Ovary (tissue), 10 donors: ENCODE measurements at regions of chr13 and their contacts with region 1.

Region 1: GRCh38 chr13:39263033-39263432 is 224.8 kb downstream of the NHLRC3 start:
- DNase-seq: peak in 2 of 5 donors; percentile 23 to 38
- H3K4me3 ChIP-seq: no peak overlapping the region
- H3K27ac ChIP-seq: no peak overlapping the region
- H3K4me1 ChIP-seq: peaks cover 2% of the 10 kb centered on the region
- H3K27me3 ChIP-seq: no peaks in the 10 kb centered on the region
- CTCF ChIP-seq: peak in 1 of 3 donors; percentile 48
- EP300 ChIP-seq: no peak
- POLR2A ChIP-seq: no peak

Region 2: DNA sequence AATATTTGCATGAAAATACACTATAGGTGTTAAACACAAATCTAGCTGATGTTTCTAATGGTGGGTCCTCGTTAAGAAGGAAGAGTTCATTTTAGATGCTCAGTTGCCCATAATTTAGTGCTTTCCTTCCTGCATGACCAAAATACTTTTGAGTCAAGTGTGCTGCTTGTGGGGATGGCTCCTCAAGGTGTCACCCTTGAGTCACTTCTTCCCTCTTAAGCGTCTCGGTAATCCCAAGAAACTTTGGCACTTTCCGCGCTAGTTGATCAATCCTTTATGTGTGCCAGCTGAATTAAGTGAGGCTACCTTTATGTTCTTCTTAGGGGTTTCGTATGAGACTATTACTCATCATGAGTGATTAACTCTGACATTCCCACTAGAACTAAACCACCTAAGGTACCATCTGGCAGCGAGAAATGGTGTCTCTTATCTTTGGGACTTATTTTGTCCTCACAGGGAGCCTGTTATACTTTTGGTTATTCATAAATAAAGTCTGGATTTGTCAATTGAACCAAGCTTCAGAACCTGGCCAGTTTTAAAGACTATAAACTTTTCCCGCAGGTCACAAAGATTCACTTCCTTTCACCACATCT is 118.0 kb before region 1 on chr13:
- intact Hi-C with region 1: loop called in 3 of 4 experiments (anchors 10 kb)
- DNase-seq: peak; percentile 44 to 74 (median 55)
- H3K4me3 ChIP-seq: no peak overlapping the region
- H3K27ac ChIP-seq: no peak overlapping the region
- H3K4me1 ChIP-seq: no peaks in the 10 kb centered on the region
- H3K27me3 ChIP-seq: no peaks in the 10 kb centered on the region
- CTCF ChIP-seq: peak in 2 of 3 donors; percentile 59 to 65
- EP300 ChIP-seq: no peak
- POLR2A ChIP-seq: no peak

Region 3: GRCh38 chr13:39159393-39159792 is 103.6 kb before region 1 on chr13:
- intact Hi-C with region 1: loop called in 1 of 4 experiments (anchors 10 kb)
- DNase-seq: no peak
- H3K4me3 ChIP-seq: no peak overlapping the region
- H3K27ac ChIP-seq: no peak overlapping the region
- H3K4me1 ChIP-seq: no peaks in the 10 kb centered on the region
- H3K27me3 ChIP-seq: no peaks in the 10 kb centered on the region
- CTCF ChIP-seq: no peak
- EP300 ChIP-seq: no peak
- POLR2A ChIP-seq: no peak

Region 4: GRCh38 chr13:39474600-39474999 is 211.6 kb after region 1 on chr13:
- intact Hi-C with region 1: no loop called
- DNase-seq: no peak
- H3K4me3 ChIP-seq: no peak overlapping the region
- H3K27ac ChIP-seq: no peak overlapping the region
- H3K4me1 ChIP-seq: peaks cover 2% of the 10 kb centered on the region
- H3K27me3 ChIP-seq: no peaks in the 10 kb centered on the region
- CTCF ChIP-seq: no peak
- EP300 ChIP-seq: no peak
- POLR2A ChIP-seq: no peak

Region 5: DNA sequence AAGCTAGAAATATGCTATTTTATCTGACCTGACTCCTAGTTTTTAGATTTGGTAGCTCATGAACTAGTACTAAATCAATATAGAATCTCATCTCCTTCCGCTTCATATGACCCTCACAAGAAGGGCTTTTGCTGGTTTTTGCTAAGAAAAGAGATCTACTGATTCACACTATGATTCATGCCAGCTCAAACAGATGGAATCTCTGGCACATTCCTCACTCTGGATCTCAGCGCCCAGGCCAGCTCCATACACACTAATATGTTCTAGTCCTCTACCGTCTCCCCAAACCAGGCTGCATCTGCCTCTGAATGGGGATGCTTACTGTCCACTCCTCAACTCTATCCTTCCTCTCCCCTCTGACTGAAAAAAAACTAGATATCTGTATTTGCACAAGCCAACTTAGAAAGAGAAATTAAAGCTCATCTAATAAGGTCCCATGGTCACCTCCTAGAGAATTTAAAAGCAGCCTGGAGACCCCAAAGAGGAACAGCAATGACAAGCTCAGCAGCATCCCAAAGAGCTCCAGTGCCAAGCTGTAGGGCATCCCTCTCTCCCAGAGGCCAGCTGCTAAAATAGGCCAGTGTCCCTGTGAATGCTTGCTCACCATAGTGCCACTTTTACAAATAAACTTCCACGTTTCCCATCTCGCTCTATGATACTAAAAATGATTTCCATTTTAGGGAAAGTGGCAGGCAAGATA is 265.1 kb after region 1 on chr13:
- intact Hi-C with region 1: no loop called
- DNase-seq: no peak
- H3K4me3 ChIP-seq: no peak overlapping the region
- H3K27ac ChIP-seq: no peak overlapping the region
- H3K4me1 ChIP-seq: peaks cover 5% of the 10 kb centered on the region
- H3K27me3 ChIP-seq: no peaks in the 10 kb centered on the region
- CTCF ChIP-seq: no peak
- EP300 ChIP-seq: no peak
- POLR2A ChIP-seq: no peak